MCF 10A (cell line): ENCODE measurements at regions of chr10 and their contacts with region 1.

Region 1: DNA sequence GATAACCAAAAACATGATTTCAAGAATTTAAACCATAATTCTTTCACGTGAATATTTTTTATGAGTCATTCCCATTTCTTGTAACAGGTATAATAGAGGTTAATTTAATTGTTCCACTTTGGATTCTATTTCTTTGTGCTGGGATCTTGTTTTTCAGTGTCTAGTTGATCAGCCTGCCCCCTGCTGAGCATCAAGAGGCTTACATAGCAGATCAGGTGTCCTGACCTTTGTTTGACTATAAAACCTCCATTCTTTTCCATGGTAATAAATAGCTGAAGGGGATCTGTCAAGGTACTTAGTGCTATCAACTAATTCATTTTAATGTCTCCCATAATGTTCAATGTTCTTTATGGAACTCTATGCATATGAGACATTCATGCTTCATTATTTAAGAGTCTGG is 4.9 kb downstream of the COL17A1 start:
- DNase-seq: peak; percentile 65
- H3K4me3 Mint-ChIP-seq: peak overlapping the region; percentile 83
- H3K27ac Mint-ChIP-seq: no peak overlapping the region
- H3K4me1 Mint-ChIP-seq: peaks cover 24% of the 10 kb centered on the region
- H3K27me3 Mint-ChIP-seq: no peaks in the 10 kb centered on the region
- CTCF ChIP-seq: peak; percentile 45

Region 2: GRCh38 chr10:103881416-103882284 is 199.1 kb before region 1 on chr10:
- CTCF ChIA-PET with region 1: interaction called, 4 read pairs
- POLR2A ChIA-PET with region 1: interaction called, 10 read pairs
- intact Hi-C with region 1: no loop called
- DNase-seq: peak; percentile 86
- H3K4me3 Mint-ChIP-seq: no peak overlapping the region
- H3K27ac Mint-ChIP-seq: peak overlapping the region; percentile 68
- H3K4me1 Mint-ChIP-seq: peaks cover 38% of the 10 kb centered on the region
- H3K27me3 Mint-ChIP-seq: no peaks in the 10 kb centered on the region
- CTCF ChIP-seq: no peak

Region 3: GRCh38 chr10:104045151-104046089 is 35.3 kb before region 1 on chr10:
- CTCF ChIA-PET with region 1: no interaction called
- POLR2A ChIA-PET with region 1: interaction called, 3 read pairs
- intact Hi-C with region 1: loop called (anchors 5 kb)
- DNase-seq: peak; percentile 64
- H3K4me3 Mint-ChIP-seq: no peak overlapping the region
- H3K27ac Mint-ChIP-seq: no peak overlapping the region
- H3K4me1 Mint-ChIP-seq: peaks cover 4% of the 10 kb centered on the region
- H3K27me3 Mint-ChIP-seq: no peaks in the 10 kb centered on the region
- CTCF ChIP-seq: peak; percentile 47

Region 4: GRCh38 chr10:104067525-104067924 is 13.2 kb before region 1 on chr10:
- CTCF ChIA-PET with region 1: interaction called, 33 read pairs
- POLR2A ChIA-PET with region 1: interaction called, 71 read pairs
- intact Hi-C with region 1: no loop called
- DNase-seq: no peak
- H3K4me3 Mint-ChIP-seq: no peak overlapping the region
- H3K27ac Mint-ChIP-seq: peak overlapping the region; percentile 70
- H3K4me1 Mint-ChIP-seq: no peaks in the 10 kb centered on the region
- H3K27me3 Mint-ChIP-seq: no peaks in the 10 kb centered on the region
- CTCF ChIP-seq: no peak

Region 5: GRCh38 chr10:104099274-104099673 is 18.5 kb after region 1 on chr10:
- CTCF ChIA-PET with region 1: interaction called, 6 read pairs
- POLR2A ChIA-PET with region 1: interaction called, 26 read pairs
- intact Hi-C with region 1: no loop called
- DNase-seq: no peak
- H3K4me3 Mint-ChIP-seq: no peak overlapping the region
- H3K27ac Mint-ChIP-seq: no peak overlapping the region
- H3K4me1 Mint-ChIP-seq: peaks cover 6% of the 10 kb centered on the region
- H3K27me3 Mint-ChIP-seq: no peaks in the 10 kb centered on the region
- CTCF ChIP-seq: no peak

Region 6: DNA sequence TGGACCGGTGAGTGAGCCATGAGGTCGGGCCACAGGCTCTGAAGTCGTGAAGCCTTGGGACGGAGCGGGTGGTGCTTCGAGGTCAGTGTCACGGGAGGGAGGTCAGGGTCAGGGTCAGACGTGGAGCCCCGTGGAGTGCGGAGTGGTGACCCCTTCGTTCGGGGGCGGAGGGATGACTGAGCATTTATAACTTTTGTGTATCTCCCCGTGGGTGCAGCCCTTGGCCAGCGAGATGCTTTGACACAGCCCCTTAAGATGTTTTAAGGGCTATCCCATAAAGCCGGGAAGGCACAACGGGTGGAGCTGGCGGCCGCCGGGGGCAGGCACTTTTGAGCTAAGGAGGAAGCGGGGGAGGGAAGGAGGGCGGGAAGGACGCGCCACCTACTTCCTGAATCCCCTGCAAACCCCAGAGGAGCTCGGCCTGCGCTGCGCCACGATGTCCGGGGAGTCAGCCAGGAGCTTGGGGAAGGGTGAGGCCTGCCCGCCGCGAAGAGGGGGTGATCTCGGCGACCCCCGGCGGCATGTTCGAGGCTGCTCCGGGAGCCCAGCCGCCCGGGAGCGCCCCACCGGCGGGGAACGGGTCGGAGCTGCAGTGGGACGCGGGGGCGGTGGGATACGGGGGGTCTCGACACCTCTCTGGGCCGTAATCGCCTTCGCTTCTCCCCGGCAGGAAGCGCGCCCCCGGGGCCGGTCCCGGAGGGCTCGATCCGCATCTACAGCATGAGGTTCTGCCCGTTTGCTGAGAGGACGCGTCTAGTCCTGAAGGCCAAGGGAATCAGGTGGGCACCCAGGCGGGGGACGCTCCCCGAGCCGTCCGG is 173.9 kb after region 1 on chr10 and contains the start of gene GSTO1:
- CTCF ChIA-PET with region 1: interaction called, 5 read pairs
- POLR2A ChIA-PET with region 1: interaction called, 27 read pairs
- intact Hi-C with region 1: no loop called
- DNase-seq: peak; percentile 79
- H3K4me3 Mint-ChIP-seq: peak within 1 kb of the TSS; percentile 80
- H3K27ac Mint-ChIP-seq: peak within 1 kb of the TSS; percentile 85
- H3K4me1 Mint-ChIP-seq: peaks cover 28% of the 10 kb centered on the region
- H3K27me3 Mint-ChIP-seq: no peaks in the 10 kb centered on the region
- CTCF ChIP-seq: no peak
- total RNA-seq, gene GSTO1: 54.6 and 61.8 TPM in 2 replicates

Region 7: DNA sequence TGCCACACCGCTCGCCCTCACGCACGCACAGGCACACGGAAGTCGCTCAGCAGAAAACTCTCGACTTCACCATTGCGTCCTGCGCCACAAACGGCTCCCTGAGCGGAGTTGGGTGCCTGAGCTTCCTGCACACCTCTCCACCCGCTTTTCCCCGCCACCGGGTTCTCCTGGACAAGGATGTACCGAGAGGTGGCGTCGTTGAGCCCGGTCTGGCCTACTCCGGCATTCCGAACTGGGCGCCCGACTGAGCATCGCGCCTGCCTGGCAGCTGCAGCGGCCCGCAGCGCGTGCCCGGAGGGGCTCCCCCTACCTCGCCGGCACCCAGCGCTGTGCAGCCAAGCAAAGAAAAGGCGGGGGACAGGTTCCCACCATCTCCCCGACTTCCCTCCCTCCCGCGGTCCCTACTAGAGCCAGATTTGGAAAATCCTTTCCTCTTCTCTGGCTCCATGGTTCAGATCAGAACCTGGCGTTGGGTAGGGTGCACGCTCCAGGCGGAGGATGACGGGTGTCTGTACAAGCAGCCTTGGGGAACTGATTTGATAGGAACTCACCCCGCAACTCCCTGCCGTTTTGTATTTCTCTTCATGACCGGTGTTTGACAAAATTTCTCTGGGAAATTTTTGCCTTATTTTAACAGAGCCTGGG is 562.0 kb after region 1 on chr10:
- CTCF ChIA-PET with region 1: no interaction called
- POLR2A ChIA-PET with region 1: no interaction called
- intact Hi-C with region 1: no loop called
- DNase-seq: peak; percentile 64
- H3K4me3 Mint-ChIP-seq: peak overlapping the region; percentile 65
- H3K27ac Mint-ChIP-seq: no peak overlapping the region
- H3K4me1 Mint-ChIP-seq: peaks cover 7% of the 10 kb centered on the region
- H3K27me3 Mint-ChIP-seq: peaks cover 57% of the 10 kb centered on the region
- CTCF ChIP-seq: peak; percentile 48